ENCODE measurements at regions of chr5 and their contacts with region 1.

Region 1: DNA sequence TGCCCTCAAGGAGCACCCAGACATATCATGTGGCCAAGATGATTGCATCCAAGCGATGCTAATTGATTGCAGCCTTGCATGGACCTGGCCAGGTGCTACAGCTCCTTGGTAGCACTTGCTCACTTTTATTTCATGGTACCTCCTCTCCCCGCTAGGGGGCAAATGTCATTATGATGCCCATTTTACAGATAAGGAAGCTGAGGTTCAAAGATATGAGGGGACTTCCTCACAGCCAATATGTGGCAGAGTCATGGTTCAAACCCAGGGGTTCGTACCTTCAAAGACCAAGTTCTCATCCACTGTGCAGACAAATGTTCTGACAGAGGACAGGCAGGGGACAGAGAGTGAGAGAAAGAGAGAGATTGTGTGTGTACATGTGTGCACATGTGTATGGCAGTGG is 21.9 kb upstream of the KCNMB1 start:
- DNase-seq: no peak
- H3K4me3 ChIP-seq: no peak overlapping the region
- H3K27ac ChIP-seq: no peak overlapping the region
- H3K4me1 ChIP-seq: peaks cover 0 to 6% (median 0%) of the 10 kb centered on the region in 3 donors
- H3K27me3 ChIP-seq: no peaks in the 10 kb centered on the region
- CTCF ChIP-seq: no peak
- POLR2A ChIP-seq: no peak

Region 2: GRCh38 chr5:170267431-170268152 is 143.5 kb before region 1 on chr5:
- intact Hi-C with region 1: loop called (anchors 10 kb)
- DNase-seq: no peak
- H3K4me3 ChIP-seq: peak overlapping the region in 1 of 4 donors; percentile 24
- H3K27ac ChIP-seq: peak overlapping the region in 3 of 4 donors; percentile 45 to 61 (median 57)
- H3K4me1 ChIP-seq: peaks cover 14 to 41% (median 15%) of the 10 kb centered on the region in 3 donors
- H3K27me3 ChIP-seq: peaks cover 0 to 23% (median 2%) of the 10 kb centered on the region in 4 donors
- CTCF ChIP-seq: peak; percentile 68 to 79 (median 78)
- POLR2A ChIP-seq: no peak

Region 3: GRCh38 chr5:170538696-170539586 is 127.8 kb after region 1 on chr5:
- intact Hi-C with region 1: no loop called
- DNase-seq: no peak
- H3K4me3 ChIP-seq: no peak overlapping the region
- H3K27ac ChIP-seq: no peak overlapping the region
- H3K4me1 ChIP-seq: no peaks in the 10 kb centered on the region
- H3K27me3 ChIP-seq: peaks cover 0 to 21% (median 0%) of the 10 kb centered on the region in 4 donors
- CTCF ChIP-seq: no peak
- POLR2A ChIP-seq: no peak

Measured in esophagus squamous epithelium (tissue), 5 donors.